Gastrocnemius medialis (tissue), 4 donors: ENCODE measurements at regions of chr1 and their contacts with region 1.

Region 1: GRCh38 chr1:59947047-59947938 is 20.7 kb upstream of the CYP2J2 start:
- DNase-seq: peak; percentile 29 to 44
- ATAC-seq: peak; percentile 92 to 94
- H3K4me3 ChIP-seq: no peak overlapping the region
- H3K27ac ChIP-seq: no peak overlapping the region
- H3K4me1 ChIP-seq: peaks cover 0 to 4% of the 10 kb centered on the region in 2 donors
- H3K27me3 ChIP-seq: no peaks in the 10 kb centered on the region
- CTCF ChIP-seq: peak; percentile 79 to 93 (median 82)
- POLR2A ChIP-seq: no peak

Region 2: DNA sequence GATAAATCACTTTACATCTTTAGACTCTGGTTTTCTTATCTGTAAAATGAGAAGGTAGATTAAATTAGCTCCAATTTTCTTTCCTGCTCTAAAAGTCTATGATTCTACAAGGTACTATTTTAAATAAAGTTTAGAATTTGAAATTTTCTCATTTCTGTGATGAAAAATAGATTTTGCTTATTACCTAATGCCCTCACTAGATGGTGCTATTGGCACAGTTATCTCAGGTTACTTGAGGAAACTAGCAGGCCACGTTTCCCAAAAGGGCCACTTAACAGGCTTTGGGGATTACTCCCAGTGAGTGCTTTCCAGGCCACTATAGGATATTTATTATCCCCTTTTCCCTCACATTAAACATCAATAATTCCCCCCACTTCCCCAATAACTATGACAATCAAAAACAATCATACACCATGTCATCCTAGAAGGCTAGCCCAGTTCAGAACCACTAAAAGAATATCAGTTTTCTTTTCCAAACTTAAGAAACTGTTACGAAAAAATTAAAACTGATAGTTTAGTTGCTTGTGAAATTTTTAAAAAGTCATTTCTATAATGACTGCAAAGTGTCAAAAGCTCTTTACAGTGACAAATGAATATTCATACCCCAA is 1431.4 kb before region 1 on chr1:
- in situ Hi-C with region 1: no loop called
- intact Hi-C with region 1: loop called (anchors 10 kb)
- DNase-seq: peak; percentile 19 to 23
- ATAC-seq: peak; percentile 63 to 89
- H3K4me3 ChIP-seq: no peak overlapping the region
- H3K27ac ChIP-seq: peak overlapping the region in 1 of 4 donors; percentile 38
- H3K4me1 ChIP-seq: no peaks in the 10 kb centered on the region
- H3K27me3 ChIP-seq: no peaks in the 10 kb centered on the region
- CTCF ChIP-seq: peak; percentile 59 to 81 (median 70)
- POLR2A ChIP-seq: no peak

Region 3: DNA sequence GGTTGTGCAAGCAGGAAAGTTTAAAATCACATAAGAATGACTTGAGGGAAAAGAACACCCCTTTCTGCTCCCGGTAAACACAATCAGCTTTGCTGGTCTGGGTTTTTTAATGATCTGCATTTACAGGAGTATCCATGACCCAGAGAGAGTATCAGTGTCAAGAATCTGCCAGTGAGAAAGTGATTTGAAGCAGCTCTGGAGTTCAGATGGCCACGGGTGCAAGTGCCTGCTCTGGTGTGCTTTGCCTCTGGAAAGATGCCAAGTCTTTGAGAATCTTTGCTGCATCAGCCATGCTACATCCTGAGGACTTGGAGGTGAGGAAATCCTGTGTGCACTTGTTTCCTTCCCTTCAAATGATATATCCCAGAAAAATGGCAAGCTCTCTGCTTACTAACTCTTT is 1228.9 kb before region 1 on chr1:
- in situ Hi-C with region 1: loop called in 1 of 4 experiments (anchors 25 kb)
- intact Hi-C with region 1: no loop called
- DNase-seq: no peak
- ATAC-seq: no peak
- H3K4me3 ChIP-seq: no peak overlapping the region
- H3K27ac ChIP-seq: peak overlapping the region in 1 of 4 donors; percentile 18
- H3K4me1 ChIP-seq: peaks cover 3 to 15% of the 10 kb centered on the region in 2 donors
- H3K27me3 ChIP-seq: no peaks in the 10 kb centered on the region
- CTCF ChIP-seq: no peak
- POLR2A ChIP-seq: no peak

Region 4: GRCh38 chr1:58739856-58740466 is 1207.3 kb before region 1 on chr1:
- in situ Hi-C with region 1: loop called in 1 of 4 experiments (anchors 25 kb)
- intact Hi-C with region 1: no loop called
- DNase-seq: no peak
- ATAC-seq: peak in 1 of 2 donors; percentile 79
- H3K4me3 ChIP-seq: no peak overlapping the region
- H3K27ac ChIP-seq: no peak overlapping the region
- H3K4me1 ChIP-seq: peaks cover 6% of the 10 kb centered on the region in 2 donors
- H3K27me3 ChIP-seq: no peaks in the 10 kb centered on the region
- CTCF ChIP-seq: peak; percentile 78 to 95 (median 83)
- POLR2A ChIP-seq: no peak

Region 5: GRCh38 chr1:59076612-59077011 is 870.7 kb before region 1 on chr1:
- in situ Hi-C with region 1: no loop called
- intact Hi-C with region 1: no loop called
- DNase-seq: no peak
- ATAC-seq: peak in 1 of 2 donors; percentile 48
- H3K4me3 ChIP-seq: no peak overlapping the region
- H3K27ac ChIP-seq: no peak overlapping the region
- H3K4me1 ChIP-seq: no peaks in the 10 kb centered on the region
- H3K27me3 ChIP-seq: no peaks in the 10 kb centered on the region
- CTCF ChIP-seq: peak in 1 of 5 experiments; percentile 35
- POLR2A ChIP-seq: no peak

Region 6: GRCh38 chr1:59880735-59881134 is 66.6 kb before region 1 on chr1:
- in situ Hi-C with region 1: loop called in 2 of 4 experiments (anchors 5 to 10 kb)
- intact Hi-C with region 1: loop called (anchors 1 kb)
- DNase-seq: peak in 1 of 2 donors; percentile 36
- ATAC-seq: peak in 1 of 2 donors; percentile 12
- H3K4me3 ChIP-seq: no peak overlapping the region
- H3K27ac ChIP-seq: no peak overlapping the region
- H3K4me1 ChIP-seq: peaks cover 0 to 4% of the 10 kb centered on the region in 2 donors
- H3K27me3 ChIP-seq: no peaks in the 10 kb centered on the region
- CTCF ChIP-seq: no peak
- POLR2A ChIP-seq: no peak

Region 7: DNA sequence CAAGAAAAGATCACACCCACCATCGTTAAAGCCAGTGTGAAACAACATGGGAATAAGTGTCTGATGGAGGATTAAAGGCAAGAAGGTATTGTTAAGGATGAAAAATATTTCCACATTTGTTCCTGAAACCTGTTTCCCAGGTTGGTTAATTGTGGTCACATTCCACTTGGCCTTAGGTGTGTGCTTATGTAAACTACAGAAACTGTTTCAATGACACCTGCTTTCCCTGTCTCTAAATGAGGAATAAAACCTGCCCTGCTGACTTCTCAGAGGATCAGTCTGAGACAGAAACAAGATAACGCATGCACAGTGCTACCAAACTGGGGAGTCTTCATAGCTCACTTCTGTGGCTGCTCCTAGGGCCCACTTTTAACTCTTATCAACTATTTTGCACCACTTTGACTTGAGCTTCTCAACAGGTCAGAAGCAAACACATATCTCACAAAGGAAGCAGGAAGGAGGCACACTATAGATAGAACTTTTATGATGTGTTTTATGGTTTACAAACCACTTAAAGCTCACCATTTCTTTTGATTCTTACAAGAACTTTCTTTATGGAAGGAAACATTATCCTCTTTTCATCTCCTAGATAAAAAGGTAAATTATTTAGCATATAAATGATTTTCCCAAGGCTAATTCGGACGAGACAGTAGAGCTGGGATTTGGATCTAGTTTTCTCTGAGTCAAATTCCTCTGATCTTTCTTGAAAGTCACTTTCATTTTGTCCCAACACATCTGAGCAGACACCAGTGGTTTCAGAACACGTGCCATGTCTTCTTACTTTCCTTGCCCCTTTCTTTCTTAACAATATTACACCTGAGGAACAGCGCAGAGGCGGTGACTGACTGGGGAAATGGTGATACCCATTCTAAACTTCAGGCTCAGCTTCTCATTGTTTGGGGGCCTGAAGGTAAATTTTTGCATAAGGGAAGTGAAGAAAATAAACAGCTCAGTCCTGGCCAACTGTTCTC is 54.2 kb before region 1 on chr1:
- in situ Hi-C with region 1: loop called in 2 of 4 experiments (anchors 10 kb)
- intact Hi-C with region 1: no loop called
- DNase-seq: no peak
- ATAC-seq: no peak
- H3K4me3 ChIP-seq: no peak overlapping the region
- H3K27ac ChIP-seq: no peak overlapping the region
- H3K4me1 ChIP-seq: peaks cover 0 to 13% of the 10 kb centered on the region in 2 donors
- H3K27me3 ChIP-seq: no peaks in the 10 kb centered on the region
- CTCF ChIP-seq: no peak
- POLR2A ChIP-seq: no peak

Region 8: DNA sequence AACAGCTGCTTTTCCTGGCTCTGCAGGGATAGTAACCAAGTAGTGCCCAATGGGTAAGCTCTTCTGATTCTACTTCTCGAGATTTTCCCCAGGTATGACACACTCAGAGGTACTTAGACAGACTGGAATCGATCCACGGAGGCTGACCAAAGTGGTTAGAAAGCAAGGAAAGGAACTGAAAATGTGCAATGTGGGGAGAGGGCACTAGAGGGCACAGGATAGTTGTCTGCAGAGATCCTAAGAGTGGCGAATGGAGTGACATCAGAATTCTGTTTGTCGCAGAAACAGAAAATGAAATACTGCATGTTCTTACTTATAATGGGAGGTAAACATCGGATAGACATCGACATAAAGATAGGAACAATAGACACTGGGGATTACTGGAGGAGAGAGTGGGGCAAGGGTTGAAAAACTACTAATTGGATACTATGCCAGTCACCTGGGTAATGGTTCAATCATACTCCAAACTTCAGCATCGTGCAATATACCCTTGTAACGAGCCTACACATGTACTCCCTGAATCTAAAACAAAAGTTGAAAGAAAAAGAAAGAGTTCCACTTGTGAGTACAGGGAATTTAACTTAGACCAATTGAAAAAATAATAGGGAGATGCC is 44.0 kb before region 1 on chr1:
- in situ Hi-C with region 1: loop called in 1 of 4 experiments (anchors 10 kb)
- intact Hi-C with region 1: loop called (anchors 2 kb)
- DNase-seq: no peak
- ATAC-seq: no peak
- H3K4me3 ChIP-seq: no peak overlapping the region
- H3K27ac ChIP-seq: no peak overlapping the region
- H3K4me1 ChIP-seq: no peaks in the 10 kb centered on the region
- H3K27me3 ChIP-seq: no peaks in the 10 kb centered on the region
- CTCF ChIP-seq: peak in 3 of 5 experiments; percentile 8 to 21 (median 15)
- POLR2A ChIP-seq: no peak